Activated B cell treated with CpG ODN at 0.5 μM for 24 hours (primary cell): ENCODE measurements at regions of chr10 and their contacts with region 1.

Region 1: GRCh38 chr10:63133056-63133820 is at the start of gene NRBF2:
- DNase-seq: peak; percentile 97
- ATAC-seq: peak; percentile 88
- H3K4me3 Mint-ChIP-seq: peak within 1 kb of the TSS; percentile 93
- H3K27ac Mint-ChIP-seq: peak within 1 kb of the TSS; percentile 92
- H3K4me1 Mint-ChIP-seq: peaks cover 44% of the 10 kb centered on the region
- H3K27me3 Mint-ChIP-seq: no peaks in the 10 kb centered on the region
- CTCF ChIP-seq: no peak
- total RNA-seq, gene NRBF2: 23.8 and 26.9 TPM in 2 replicates

Region 2: GRCh38 chr10:62456611-62457101 is 676.6 kb before region 1 on chr10:
- CTCF ChIA-PET with region 1: no interaction called
- POLR2A ChIA-PET with region 1: interaction called, 3 read pairs
- intact Hi-C with region 1: loop called (anchors 1 kb)
- DNase-seq: peak; percentile 22
- ATAC-seq: peak; percentile 93
- H3K4me3 Mint-ChIP-seq: peak overlapping the region; percentile 53
- H3K27ac Mint-ChIP-seq: peak overlapping the region; percentile 74
- H3K4me1 Mint-ChIP-seq: peaks cover 39% of the 10 kb centered on the region
- H3K27me3 Mint-ChIP-seq: no peaks in the 10 kb centered on the region
- CTCF ChIP-seq: no peak

Region 3: GRCh38 chr10:62653254-62653653 is 480.0 kb before region 1 on chr10:
- CTCF ChIA-PET with region 1: no interaction called
- POLR2A ChIA-PET with region 1: no interaction called
- intact Hi-C with region 1: loop called (anchors 1 kb)
- DNase-seq: no peak
- ATAC-seq: peak; percentile 92
- H3K4me3 Mint-ChIP-seq: peak overlapping the region; percentile 55
- H3K27ac Mint-ChIP-seq: peak overlapping the region; percentile 87
- H3K4me1 Mint-ChIP-seq: peaks cover 66% of the 10 kb centered on the region
- H3K27me3 Mint-ChIP-seq: peaks cover 1% of the 10 kb centered on the region
- CTCF ChIP-seq: no peak

Region 4: GRCh38 chr10:63157845-63158624 is 24.8 kb after region 1 on chr10:
- CTCF ChIA-PET with region 1: interaction called, 3 read pairs
- POLR2A ChIA-PET with region 1: no interaction called
- intact Hi-C with region 1: loop called (anchors 1 kb)
- DNase-seq: no peak
- ATAC-seq: peak; percentile 67
- H3K4me3 Mint-ChIP-seq: no peak overlapping the region
- H3K27ac Mint-ChIP-seq: no peak overlapping the region
- H3K4me1 Mint-ChIP-seq: peaks cover 9% of the 10 kb centered on the region
- H3K27me3 Mint-ChIP-seq: no peaks in the 10 kb centered on the region
- CTCF ChIP-seq: no peak

Region 5: GRCh38 chr10:63331586-63331985 is 198.3 kb after region 1 on chr10:
- CTCF ChIA-PET with region 1: no interaction called
- POLR2A ChIA-PET with region 1: interaction called, 14 read pairs
- intact Hi-C with region 1: no loop called
- DNase-seq: no peak
- ATAC-seq: no peak
- H3K4me3 Mint-ChIP-seq: no peak overlapping the region
- H3K27ac Mint-ChIP-seq: no peak overlapping the region
- H3K4me1 Mint-ChIP-seq: no peaks in the 10 kb centered on the region
- H3K27me3 Mint-ChIP-seq: no peaks in the 10 kb centered on the region
- CTCF ChIP-seq: no peak